PC-3 (cell line): ENCODE measurements at regions of chr9 and their contacts with region 1.

Region 1: GRCh38 chr9:88534456-88535261 is at the start of gene NXNL2:
- DNase-seq: peak; percentile 76
- ATAC-seq: peak; percentile 63
- H3K4me3 ChIP-seq: peak within 1 kb of the TSS; percentile 88
- H3K27ac ChIP-seq: peak within 1 kb of the TSS; percentile 81
- H3K4me1 ChIP-seq: peaks cover 21% of the 10 kb centered on the region
- H3K27me3 ChIP-seq: no peaks in the 10 kb centered on the region
- CTCF ChIP-seq: no peak
- total RNA-seq, gene NXNL2: 0.66 TPM in 1 of 2 replicates, not detected in the other

Region 2: DNA sequence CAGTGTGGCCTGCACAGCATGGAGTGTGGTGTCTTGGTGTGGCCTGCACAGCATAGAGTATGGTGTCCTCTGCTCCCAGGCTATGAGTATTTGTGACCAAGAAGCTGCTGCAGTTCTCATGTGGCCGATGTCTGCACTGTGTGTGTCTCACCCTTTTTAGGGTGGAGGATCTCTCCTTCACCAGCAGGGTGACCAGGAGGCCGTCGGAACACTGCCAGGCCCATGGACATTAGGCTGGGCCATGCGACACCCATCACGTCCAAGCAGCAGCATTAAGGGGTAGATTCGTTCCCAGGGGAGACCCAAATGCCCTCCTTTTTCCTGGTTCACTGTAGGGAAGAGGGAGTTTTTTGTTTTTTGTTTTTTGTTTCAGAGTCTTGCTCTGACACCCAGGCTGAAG is 261.7 kb before region 1 on chr9:
- CTCF ChIA-PET with region 1: no interaction called
- POLR2A ChIA-PET with region 1: interaction called, 26 read pairs
- intact Hi-C with region 1: no loop called
- DNase-seq: no peak
- ATAC-seq: no peak
- H3K4me3 ChIP-seq: no peak overlapping the region
- H3K27ac ChIP-seq: no peak overlapping the region
- H3K4me1 ChIP-seq: peaks cover 22% of the 10 kb centered on the region
- H3K27me3 ChIP-seq: no peaks in the 10 kb centered on the region
- CTCF ChIP-seq: no peak

Region 3: DNA sequence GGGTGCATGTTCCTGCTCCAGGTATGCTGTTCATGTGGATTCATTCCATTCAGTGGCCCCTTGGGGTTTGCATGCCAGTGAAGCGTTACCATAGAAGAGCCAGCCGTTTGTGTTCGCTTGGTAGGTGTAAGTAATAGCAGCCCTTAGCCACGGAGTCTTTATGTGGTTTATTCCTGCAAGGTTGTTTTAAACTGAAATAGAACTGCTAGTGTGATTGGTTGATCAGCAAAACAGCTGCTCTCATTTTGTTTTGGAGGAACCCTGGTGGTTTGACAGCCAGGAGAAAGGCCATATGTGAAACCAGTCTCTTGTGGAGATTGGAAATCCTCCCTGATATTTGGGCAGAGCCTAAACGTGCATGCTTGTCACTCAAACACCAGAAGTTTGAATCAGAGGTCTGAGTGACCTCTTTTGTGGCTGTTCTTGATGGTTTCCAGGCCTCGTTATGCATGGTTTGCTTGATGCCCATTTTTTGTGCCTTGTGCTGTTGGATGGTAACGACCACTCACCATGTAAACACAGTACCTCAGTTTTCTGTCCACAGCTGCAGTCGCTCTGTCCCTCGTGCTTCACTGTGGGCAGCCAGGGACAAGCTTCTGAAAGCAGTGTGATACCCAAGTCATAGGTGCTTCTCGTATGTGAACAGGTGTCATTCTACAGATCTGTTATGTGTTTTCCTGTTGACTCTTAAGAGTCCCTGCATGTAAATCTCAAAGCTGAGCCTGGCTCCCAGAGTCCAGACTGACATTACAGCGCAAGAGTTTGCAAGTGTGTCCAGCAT is 58.0 kb before region 1 on chr9:
- CTCF ChIA-PET with region 1: no interaction called
- POLR2A ChIA-PET with region 1: no interaction called
- intact Hi-C with region 1: loop called (anchors 5 kb)
- DNase-seq: peak; percentile 6
- ATAC-seq: no peak; the same call in 1 of the 2 replicates
- H3K4me3 ChIP-seq: peak overlapping the region; percentile 27; the same call in 1 of the 2 replicates
- H3K27ac ChIP-seq: peak overlapping the region; percentile 95
- H3K4me1 ChIP-seq: peaks cover 52% of the 10 kb centered on the region
- H3K27me3 ChIP-seq: no peaks in the 10 kb centered on the region
- CTCF ChIP-seq: no peak

Region 4: DNA sequence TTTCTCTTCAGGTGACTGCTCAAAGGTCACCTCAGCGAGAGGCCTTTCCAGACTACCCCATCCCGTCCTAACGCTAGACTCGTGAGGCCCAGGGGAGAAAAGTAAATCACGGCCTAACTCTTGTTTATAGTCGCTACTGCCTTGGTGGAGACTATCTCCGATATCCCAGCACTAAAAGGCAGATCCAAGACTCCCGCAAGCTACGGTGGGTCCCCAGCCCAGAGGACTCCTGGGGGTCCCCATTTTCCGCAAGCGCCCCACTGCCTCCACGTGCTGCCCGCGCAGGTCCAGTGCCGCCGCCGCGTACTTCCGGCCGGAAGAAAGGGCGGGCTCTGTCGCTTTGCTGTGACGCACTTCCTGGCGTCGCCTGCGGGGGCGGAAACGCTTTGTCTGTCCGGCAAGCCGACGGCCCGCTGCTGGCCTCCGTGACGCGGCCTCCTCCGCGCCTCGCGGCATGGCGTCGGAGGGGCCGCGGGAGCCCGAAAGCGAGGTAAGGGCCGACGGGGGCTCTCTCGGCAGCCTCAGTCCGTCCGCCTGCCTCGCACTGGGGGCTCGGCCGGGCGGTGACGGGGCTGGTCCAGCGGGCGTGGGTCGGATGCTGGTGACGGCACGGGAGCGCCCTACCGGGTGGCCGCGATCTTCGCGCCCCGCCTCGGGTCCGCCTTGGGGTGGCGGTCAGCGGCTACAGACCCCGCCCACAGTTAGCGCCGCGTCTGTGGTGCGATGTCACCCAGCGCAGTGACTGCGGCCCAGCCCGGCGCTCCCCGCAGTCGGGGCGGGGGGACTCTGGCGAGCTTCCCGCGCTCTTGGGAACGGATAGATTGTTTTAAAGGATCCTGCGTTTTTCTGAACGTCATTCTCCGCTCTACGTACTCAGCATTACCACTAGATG is 783.7 kb after region 1 on chr9 and contains the start of gene SECISBP2:
- CTCF ChIA-PET with region 1: no interaction called
- POLR2A ChIA-PET with region 1: no interaction called
- intact Hi-C with region 1: loop called (anchors 10 kb)
- DNase-seq: peak; percentile 91
- ATAC-seq: peak; percentile 95
- H3K4me3 ChIP-seq: peak within 1 kb of the TSS; percentile 74
- H3K27ac ChIP-seq: peak within 1 kb of the TSS; percentile 96
- H3K4me1 ChIP-seq: peaks cover 37% of the 10 kb centered on the region
- H3K27me3 ChIP-seq: no peaks in the 10 kb centered on the region
- CTCF ChIP-seq: peak; percentile 76
- total RNA-seq, gene SECISBP2: 14.4 and 15.7 TPM in 2 replicates